CD14-positive monocyte (primary cell): ENCODE measurements at regions of chr1 and their contacts with region 1.

Region 1: DNA sequence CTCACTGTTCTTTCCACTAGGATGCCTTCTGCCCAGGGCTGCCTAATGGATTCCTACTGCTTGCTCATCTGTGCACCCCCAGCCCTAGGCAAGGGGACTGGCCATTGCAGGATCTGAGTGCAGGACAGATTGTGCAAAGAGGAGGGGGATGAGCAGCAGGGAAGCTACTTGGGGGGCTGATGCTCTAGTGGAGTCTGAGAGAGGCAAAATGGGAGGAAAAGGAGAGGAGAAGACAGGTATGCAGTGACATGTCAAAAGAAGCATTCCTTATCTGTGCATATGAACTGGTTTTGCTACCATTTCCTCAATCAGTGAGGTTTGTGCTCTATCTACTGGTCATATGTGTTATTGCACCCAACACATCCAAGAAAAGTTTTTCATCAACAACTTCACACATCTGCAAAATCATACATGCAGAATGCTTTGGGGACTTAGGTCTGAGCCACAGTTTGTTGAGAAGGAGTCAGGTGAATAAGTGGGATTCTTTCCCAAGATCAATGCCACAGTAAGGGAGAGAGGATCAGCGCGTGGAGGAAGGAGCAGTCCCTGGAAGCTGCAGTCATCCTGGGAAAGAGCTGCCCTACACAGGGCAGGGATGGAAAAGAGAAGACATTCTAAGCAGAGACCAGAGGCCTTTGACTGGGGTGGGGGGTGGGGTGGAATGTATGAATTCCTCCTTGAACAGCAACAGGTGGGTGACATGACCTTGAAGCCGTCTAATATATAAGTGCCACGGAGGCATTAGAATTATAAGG is 14.4 kb downstream of the SLC5A9 start:
- DNase-seq: peak; percentile 26 to 57 (median 45)
- H3K4me3 ChIP-seq: no peak overlapping the region
- H3K4me3 Mint-ChIP-seq: no peak overlapping the region
- H3K27ac ChIP-seq: no peak overlapping the region
- H3K27ac Mint-ChIP-seq: no peak overlapping the region
- H3K4me1 ChIP-seq: peaks cover 14 to 17% of the 10 kb centered on the region in 2 donors
- H3K4me1 Mint-ChIP-seq: peaks cover 22% of the 10 kb centered on the region
- H3K27me3 ChIP-seq: no peaks in the 10 kb centered on the region
- H3K27me3 Mint-ChIP-seq: peaks cover 0 to 5% (median 2%) of the 10 kb centered on the region in 3 donors
- CTCF ChIP-seq: peak; percentile 81

Region 2: DNA sequence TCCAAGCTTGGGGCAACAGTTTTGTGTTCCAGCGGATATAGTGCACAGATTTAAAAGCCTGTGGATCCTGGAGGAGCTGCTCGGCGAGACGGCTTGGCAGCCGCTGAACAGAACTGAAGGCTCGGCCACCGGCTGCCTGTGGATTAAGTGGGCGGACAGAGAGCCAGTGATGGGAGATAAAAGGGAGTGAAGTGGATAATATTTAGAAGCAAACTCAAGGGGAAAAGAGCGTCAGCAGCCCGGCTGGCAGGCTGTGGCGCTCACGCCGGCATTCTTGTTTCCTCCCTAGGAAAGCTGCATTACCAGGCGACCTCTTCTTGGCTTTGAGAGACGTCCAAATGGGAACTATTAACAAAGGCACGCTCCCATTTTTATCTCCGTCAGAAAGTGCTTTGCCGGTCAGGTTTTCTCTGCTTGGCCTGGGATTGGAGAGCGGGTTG is 250.1 kb before region 1 on chr1:
- intact Hi-C with region 1: loop called in 1 of 2 experiments (anchors 10 kb)
- DNase-seq: no peak
- H3K4me3 ChIP-seq: no peak overlapping the region
- H3K4me3 Mint-ChIP-seq: peak overlapping the region in 1 of 2 donors; percentile 73
- H3K27ac ChIP-seq: no peak overlapping the region
- H3K27ac Mint-ChIP-seq: no peak overlapping the region
- H3K4me1 ChIP-seq: no peaks in the 10 kb centered on the region
- H3K4me1 Mint-ChIP-seq: no peaks in the 10 kb centered on the region
- H3K27me3 ChIP-seq: peaks cover 26 to 66% of the 10 kb centered on the region in 2 donors
- H3K27me3 Mint-ChIP-seq: peaks cover 60 to 62% (median 61%) of the 10 kb centered on the region in 3 donors
- CTCF ChIP-seq: no peak

Region 3: DNA sequence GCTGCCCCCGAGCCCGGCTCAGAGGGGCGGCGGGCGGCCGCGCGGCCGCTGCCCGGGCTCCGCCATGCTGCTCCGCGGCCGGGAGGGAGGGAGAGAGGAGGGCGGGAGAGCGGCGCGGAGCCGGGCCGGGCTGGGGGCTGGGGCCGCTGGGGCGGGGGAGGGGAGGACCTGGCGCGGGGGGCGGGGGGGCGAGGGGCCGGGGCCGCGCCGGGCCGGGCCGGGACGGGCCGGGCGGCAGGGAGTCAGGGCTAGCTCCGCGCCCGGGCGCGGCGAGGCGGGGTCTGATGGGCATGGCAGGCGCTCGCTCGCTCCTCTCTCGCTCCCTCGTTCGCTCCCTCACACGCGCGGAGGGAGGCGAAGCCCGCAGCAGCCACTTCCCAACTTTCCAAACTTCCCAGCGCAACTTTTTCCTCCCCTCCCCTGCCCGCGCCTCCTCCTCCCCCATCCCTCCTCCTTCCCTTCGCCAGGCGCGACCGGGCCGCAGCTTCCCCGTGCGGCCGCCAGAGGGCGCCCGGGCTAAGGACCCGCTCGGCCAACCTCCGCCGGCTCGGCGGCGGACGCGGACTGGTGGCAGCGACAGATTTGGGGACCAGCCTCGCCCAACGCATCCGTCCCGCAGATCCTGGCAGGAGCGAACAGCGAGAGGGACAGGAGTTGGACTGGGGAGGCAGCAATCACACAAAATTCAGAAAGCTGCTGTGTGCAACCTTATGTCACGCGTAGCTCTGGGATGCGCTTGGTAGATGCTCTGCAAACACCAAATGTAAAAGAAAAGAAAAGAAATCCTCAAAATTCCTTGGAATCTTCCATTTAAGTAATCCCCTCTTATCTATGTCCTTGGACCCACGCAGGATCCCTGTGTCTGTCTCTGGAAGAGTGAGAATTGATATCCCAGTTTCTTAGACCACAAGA is 239.3 kb before region 1 on chr1 and contains the start of gene TRABD2B:
- intact Hi-C with region 1: loop called in 1 of 2 experiments (anchors 5 kb)
- DNase-seq: peak; percentile 36 to 54 (median 40)
- H3K4me3 ChIP-seq: peak within 1 kb of the TSS in 1 of 3 experiments; percentile 18
- H3K4me3 Mint-ChIP-seq: peak within 1 kb of the TSS; percentile 80 to 84
- H3K27ac ChIP-seq: no peak within 1 kb of the TSS
- H3K27ac Mint-ChIP-seq: no peak within 1 kb of the TSS
- H3K4me1 ChIP-seq: peaks cover 2 to 5% of the 10 kb centered on the region in 2 donors
- H3K4me1 Mint-ChIP-seq: peaks cover 2% of the 10 kb centered on the region
- H3K27me3 ChIP-seq: peaks cover 35 to 52% of the 10 kb centered on the region in 2 donors
- H3K27me3 Mint-ChIP-seq: peaks cover 54 to 74% (median 56%) of the 10 kb centered on the region in 3 donors
- CTCF ChIP-seq: peak; percentile 95
- polyA plus RNA-seq, gene TRABD2B: not detected

Region 4: DNA sequence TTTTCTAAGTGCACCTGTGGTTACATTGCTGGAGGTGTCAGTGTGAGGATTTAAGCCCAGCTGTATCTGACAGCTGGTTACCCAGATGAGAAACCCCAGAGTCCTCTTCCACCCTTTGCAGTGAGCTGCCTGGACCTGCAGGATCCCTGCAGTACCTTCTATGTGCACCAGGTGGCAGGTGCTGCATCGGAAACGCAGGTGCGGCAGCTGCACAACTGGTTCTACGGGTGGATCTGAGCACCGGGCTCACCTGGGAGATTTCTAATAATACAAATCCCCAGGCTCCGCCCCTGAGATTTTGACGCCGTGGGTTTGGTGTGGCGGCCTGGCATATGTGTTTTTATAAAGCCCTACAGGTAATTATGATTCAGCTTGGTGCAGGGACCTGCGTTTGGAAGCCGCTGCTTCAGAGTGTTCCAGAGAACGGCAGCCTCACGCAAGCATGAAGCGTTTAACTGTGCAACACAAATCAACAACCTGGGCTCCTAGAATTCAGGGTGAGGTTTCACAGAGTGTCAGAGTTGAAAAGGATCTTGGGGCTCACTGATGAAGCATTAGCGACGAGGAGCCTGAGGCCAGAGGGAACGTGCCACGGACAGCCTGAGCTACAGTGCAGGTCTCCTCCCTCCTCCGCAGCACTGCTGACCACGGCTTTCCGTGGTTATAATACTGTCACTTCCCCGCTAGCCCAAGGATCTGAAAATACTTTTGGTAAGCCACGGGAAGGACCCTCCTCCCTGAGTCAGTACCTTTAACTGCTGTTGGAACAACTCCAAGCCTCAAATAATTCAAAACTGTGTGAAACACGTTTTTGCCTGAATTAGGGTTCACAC is 143.0 kb before region 1 on chr1:
- intact Hi-C with region 1: loop called in 1 of 2 experiments (anchors 5 kb)
- DNase-seq: peak; percentile 12 to 43 (median 20)
- H3K4me3 ChIP-seq: no peak overlapping the region
- H3K4me3 Mint-ChIP-seq: peak overlapping the region in 1 of 2 donors; percentile 49
- H3K27ac ChIP-seq: no peak overlapping the region
- H3K27ac Mint-ChIP-seq: peak overlapping the region in 1 of 7 donors; percentile 33
- H3K4me1 ChIP-seq: no peaks in the 10 kb centered on the region
- H3K4me1 Mint-ChIP-seq: peaks cover 6% of the 10 kb centered on the region
- H3K27me3 ChIP-seq: peaks cover 2 to 22% of the 10 kb centered on the region in 2 donors
- H3K27me3 Mint-ChIP-seq: peaks cover 16 to 47% (median 25%) of the 10 kb centered on the region in 3 donors
- CTCF ChIP-seq: peak; percentile 72